CD4-positive, alpha-beta T cell (primary cell): ENCODE measurements at regions of chr5 and their contacts with region 1.

Region 1: DNA sequence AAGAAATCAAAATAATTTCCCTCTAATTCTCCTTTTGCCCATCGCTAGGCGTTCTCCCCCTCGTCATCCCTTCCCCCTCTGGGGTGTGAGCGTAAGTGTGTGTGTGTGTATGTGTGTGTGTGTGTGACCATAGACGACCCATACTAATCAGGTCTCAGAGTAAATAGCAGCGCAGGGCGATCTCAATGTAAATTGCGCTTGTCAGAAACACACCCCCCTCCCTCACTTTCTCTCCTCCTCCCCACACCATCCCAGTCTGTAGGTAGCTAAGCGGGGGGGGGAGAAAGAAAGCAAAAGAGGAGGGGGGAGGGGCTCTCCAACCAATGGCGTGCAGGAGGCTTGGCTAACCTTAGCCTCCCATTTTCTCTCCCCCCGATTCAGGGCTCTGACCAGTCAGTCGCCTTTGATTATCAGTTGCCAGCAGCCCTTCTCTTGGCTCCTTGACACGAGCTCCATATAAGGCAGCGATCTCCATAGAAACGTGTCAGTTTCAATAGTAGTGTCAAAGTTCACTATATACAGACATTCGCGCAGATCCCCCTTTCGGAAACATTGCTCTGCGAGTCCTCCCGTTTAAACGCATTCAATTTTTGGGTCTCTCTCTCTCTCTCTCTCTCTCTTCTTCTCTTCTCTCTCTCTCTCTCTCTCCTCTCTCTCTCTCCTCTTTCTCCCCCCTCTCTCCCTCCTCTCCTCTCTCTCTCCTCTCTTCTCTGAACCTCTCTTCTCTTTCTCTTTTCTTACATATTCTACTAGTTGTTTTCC is at the start of gene NR2F1:
- DNase-seq: peak in 1 of 14 experiments; percentile 31
- ATAC-seq: no peak
- H3K4me3 ChIP-seq: no peak within 1 kb of the TSS
- H3K4me3 Mint-ChIP-seq: no peak within 1 kb of the TSS
- H3K27ac ChIP-seq: no peak within 1 kb of the TSS
- H3K27ac Mint-ChIP-seq: no peak within 1 kb of the TSS
- H3K4me1 ChIP-seq: peaks cover 62% of the 10 kb centered on the region
- H3K4me1 Mint-ChIP-seq: peaks cover 36% of the 10 kb centered on the region
- H3K27me3 ChIP-seq: peaks cover 70 to 81% of the 10 kb centered on the region in 2 experiments
- H3K27me3 Mint-ChIP-seq: peaks cover 55% of the 10 kb centered on the region
- CTCF ChIP-seq: no peak
- total RNA-seq, gene NR2F1: not detected

Region 2: DNA sequence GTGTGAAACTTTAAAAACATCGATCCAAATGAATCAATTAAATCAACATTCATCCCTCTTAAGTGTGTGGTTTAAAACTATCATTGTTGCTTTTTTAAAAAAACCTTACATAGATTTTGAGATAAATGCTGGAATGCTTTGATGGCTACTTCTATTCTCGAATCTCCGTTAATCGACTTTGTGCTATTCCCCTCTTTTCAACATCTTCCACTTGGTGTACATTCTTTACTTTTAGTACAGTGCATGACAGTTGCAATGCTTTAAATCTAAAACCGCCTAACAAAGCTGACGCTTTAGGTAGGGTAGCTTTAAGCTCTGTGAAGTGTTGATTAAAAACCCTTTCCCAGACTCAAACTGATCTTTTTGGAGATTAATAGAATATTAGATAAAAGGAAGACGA is 33.9 kb after region 1 on chr5:
- CTCF ChIA-PET with region 1: no interaction called
- POLR2A ChIA-PET with region 1: no interaction called
- intact Hi-C with region 1: loop called in 1 of 2 experiments (anchors 5 kb)
- DNase-seq: no peak
- ATAC-seq: no peak
- H3K4me3 ChIP-seq: no peak overlapping the region
- H3K4me3 Mint-ChIP-seq: no peak overlapping the region
- H3K27ac ChIP-seq: no peak overlapping the region
- H3K27ac Mint-ChIP-seq: no peak overlapping the region
- H3K4me1 ChIP-seq: peaks cover 15% of the 10 kb centered on the region
- H3K4me1 Mint-ChIP-seq: peaks cover 19% of the 10 kb centered on the region
- H3K27me3 ChIP-seq: peaks cover 19 to 31% of the 10 kb centered on the region in 2 experiments
- H3K27me3 Mint-ChIP-seq: peaks cover 71% of the 10 kb centered on the region
- CTCF ChIP-seq: no peak

Region 3: GRCh38 chr5:93800988-93801811 is 218.3 kb after region 1 on chr5:
- CTCF ChIA-PET with region 1: interaction called, 3 read pairs
- POLR2A ChIA-PET with region 1: no interaction called
- intact Hi-C with region 1: loop called (anchors 1 to 2 kb)
- DNase-seq: peak in 4 of 14 experiments; percentile 20 to 64 (median 59)
- ATAC-seq: no peak
- H3K4me3 ChIP-seq: no peak overlapping the region
- H3K4me3 Mint-ChIP-seq: no peak overlapping the region
- H3K27ac ChIP-seq: no peak overlapping the region
- H3K27ac Mint-ChIP-seq: no peak overlapping the region
- H3K4me1 ChIP-seq: no peaks in the 10 kb centered on the region
- H3K4me1 Mint-ChIP-seq: no peaks in the 10 kb centered on the region
- H3K27me3 ChIP-seq: no peaks in the 10 kb centered on the region
- H3K27me3 Mint-ChIP-seq: no peaks in the 10 kb centered on the region
- CTCF ChIP-seq: peak; percentile 70

Region 4: DNA sequence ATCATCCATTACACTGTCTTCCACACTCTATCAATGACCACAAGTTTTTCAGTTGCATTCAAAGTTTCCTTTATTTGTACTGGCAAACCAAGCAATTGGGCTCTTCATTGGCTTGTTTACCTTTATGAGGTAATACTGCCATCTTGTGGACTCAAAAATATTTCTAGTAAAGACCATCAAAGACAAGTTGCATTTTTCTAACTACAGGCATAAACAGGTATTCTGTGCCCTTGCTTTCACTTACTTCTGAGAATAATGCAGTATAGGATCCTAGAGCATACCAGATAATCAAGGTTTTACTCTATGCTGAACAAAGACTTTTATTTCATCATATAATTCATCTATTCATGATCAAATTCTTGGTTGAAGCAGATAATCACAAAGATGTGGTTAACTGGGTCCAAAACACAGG is 332.3 kb after region 1 on chr5:
- CTCF ChIA-PET with region 1: no interaction called
- POLR2A ChIA-PET with region 1: no interaction called
- intact Hi-C with region 1: loop called (anchors 2 kb)
- DNase-seq: peak in 3 of 14 experiments; percentile 51 to 58 (median 55)
- ATAC-seq: no peak
- H3K4me3 ChIP-seq: no peak overlapping the region
- H3K4me3 Mint-ChIP-seq: no peak overlapping the region
- H3K27ac ChIP-seq: no peak overlapping the region
- H3K27ac Mint-ChIP-seq: no peak overlapping the region
- H3K4me1 ChIP-seq: no peaks in the 10 kb centered on the region
- H3K4me1 Mint-ChIP-seq: no peaks in the 10 kb centered on the region
- H3K27me3 ChIP-seq: no peaks in the 10 kb centered on the region
- H3K27me3 Mint-ChIP-seq: no peaks in the 10 kb centered on the region
- CTCF ChIP-seq: peak; percentile 70

Region 5: GRCh38 chr5:94740286-94740685 is 1157.4 kb after region 1 on chr5:
- CTCF ChIA-PET with region 1: no interaction called
- POLR2A ChIA-PET with region 1: no interaction called
- intact Hi-C with region 1: loop called in 1 of 2 experiments (anchors 5 kb)
- DNase-seq: no peak
- ATAC-seq: no peak
- H3K4me3 ChIP-seq: no peak overlapping the region
- H3K4me3 Mint-ChIP-seq: no peak overlapping the region
- H3K27ac ChIP-seq: no peak overlapping the region
- H3K27ac Mint-ChIP-seq: no peak overlapping the region
- H3K4me1 ChIP-seq: peaks cover 4% of the 10 kb centered on the region
- H3K4me1 Mint-ChIP-seq: no peaks in the 10 kb centered on the region
- H3K27me3 ChIP-seq: no peaks in the 10 kb centered on the region
- H3K27me3 Mint-ChIP-seq: peaks cover 4% of the 10 kb centered on the region
- CTCF ChIP-seq: no peak